CD8-positive, alpha-beta T cell (primary cell): ENCODE measurements at regions of chr19 and their contacts with region 1.

Region 1: GRCh38 chr19:48993175-48994034 is at the starts of genes GYS1 and RUVBL2:
- DNase-seq: peak; percentile 98 to 100 (median 99)
- ATAC-seq: peak; percentile 93
- H3K4me3 ChIP-seq: peak within 1 kb of the TSS; percentile 77 to 80
- H3K4me3 Mint-ChIP-seq: peak within 1 kb of the TSS; percentile 91
- H3K27ac ChIP-seq: peak within 1 kb of the TSS; percentile 66 to 83
- H3K27ac Mint-ChIP-seq: peak within 1 kb of the TSS; percentile 93
- H3K4me1 ChIP-seq: peaks cover 22% of the 10 kb centered on the region
- H3K4me1 Mint-ChIP-seq: peaks cover 42% of the 10 kb centered on the region
- H3K27me3 ChIP-seq: no peaks in the 10 kb centered on the region
- H3K27me3 Mint-ChIP-seq: no peaks in the 10 kb centered on the region
- CTCF ChIP-seq: peak; percentile 98
- total RNA-seq, gene GYS1: 9.5 to 11.9 TPM
- total RNA-seq, gene RUVBL2: 10.5 to 11.5 TPM

Region 2: DNA sequence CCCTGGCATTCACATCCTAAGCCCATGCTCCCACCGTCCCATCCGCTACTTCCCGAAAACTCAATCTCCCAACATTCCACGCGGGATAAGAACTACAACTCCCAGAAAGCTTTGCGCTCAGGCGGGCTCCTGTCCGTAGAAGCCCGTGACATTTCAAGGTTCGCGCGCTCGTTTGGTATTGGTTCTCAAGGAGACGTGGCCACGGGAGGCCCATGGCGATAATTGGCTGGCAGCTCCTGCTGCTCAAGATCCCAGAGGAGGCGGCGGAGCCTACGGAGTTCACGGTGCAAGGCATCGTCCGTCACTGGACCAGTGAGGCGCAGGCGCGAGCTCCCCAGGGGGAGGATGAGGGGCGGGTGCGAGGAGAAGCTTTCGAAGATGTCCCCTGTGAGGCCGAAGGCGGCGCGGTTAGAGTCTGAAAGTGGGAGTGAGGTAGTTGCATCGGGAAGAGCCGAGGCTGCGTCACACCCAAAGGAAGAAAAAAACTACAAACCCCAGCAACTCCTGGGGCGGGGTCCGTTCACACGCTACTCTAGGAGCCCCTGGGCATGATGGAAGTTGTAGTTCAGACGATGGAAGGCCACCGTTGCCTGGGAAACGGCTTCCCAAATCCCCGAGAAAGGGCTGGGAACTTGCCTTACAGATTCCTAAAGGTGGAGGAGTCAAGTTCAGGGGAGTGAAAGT is 272.6 kb before region 1 on chr19:
- CTCF ChIA-PET with region 1: no interaction called
- POLR2A ChIA-PET with region 1: interaction called, 4 read pairs
- intact Hi-C with region 1: loop called in 1 of 2 experiments (anchors 10 kb)
- DNase-seq: peak; percentile 81 to 96 (median 90)
- ATAC-seq: peak; percentile 80
- H3K4me3 ChIP-seq: peak overlapping the region; percentile 65 to 69
- H3K4me3 Mint-ChIP-seq: peak overlapping the region; percentile 96
- H3K27ac ChIP-seq: peak overlapping the region; percentile 52 to 88
- H3K27ac Mint-ChIP-seq: peak overlapping the region; percentile 96
- H3K4me1 ChIP-seq: peaks cover 16% of the 10 kb centered on the region
- H3K4me1 Mint-ChIP-seq: peaks cover 24% of the 10 kb centered on the region
- H3K27me3 ChIP-seq: no peaks in the 10 kb centered on the region
- H3K27me3 Mint-ChIP-seq: no peaks in the 10 kb centered on the region
- CTCF ChIP-seq: no peak

Region 3: GRCh38 chr19:48954595-48955310 is 38.7 kb before region 1 on chr19 and contains the start of gene BAX:
- CTCF ChIA-PET with region 1: no interaction called
- POLR2A ChIA-PET with region 1: interaction called, 4 read pairs
- intact Hi-C with region 1: loop called (anchors 1 kb)
- DNase-seq: peak; percentile 61 to 91 (median 81)
- ATAC-seq: peak; percentile 86
- H3K4me3 ChIP-seq: peak within 1 kb of the TSS; percentile 60 to 98
- H3K4me3 Mint-ChIP-seq: peak within 1 kb of the TSS; percentile 91
- H3K27ac ChIP-seq: peak within 1 kb of the TSS; percentile 69 to 93
- H3K27ac Mint-ChIP-seq: peak within 1 kb of the TSS; percentile 85
- H3K4me1 ChIP-seq: peaks cover 19% of the 10 kb centered on the region
- H3K4me1 Mint-ChIP-seq: peaks cover 29% of the 10 kb centered on the region
- H3K27me3 ChIP-seq: no peaks in the 10 kb centered on the region
- H3K27me3 Mint-ChIP-seq: no peaks in the 10 kb centered on the region
- CTCF ChIP-seq: no peak
- total RNA-seq, gene BAX: 55.7 to 57.4 TPM

Region 4: DNA sequence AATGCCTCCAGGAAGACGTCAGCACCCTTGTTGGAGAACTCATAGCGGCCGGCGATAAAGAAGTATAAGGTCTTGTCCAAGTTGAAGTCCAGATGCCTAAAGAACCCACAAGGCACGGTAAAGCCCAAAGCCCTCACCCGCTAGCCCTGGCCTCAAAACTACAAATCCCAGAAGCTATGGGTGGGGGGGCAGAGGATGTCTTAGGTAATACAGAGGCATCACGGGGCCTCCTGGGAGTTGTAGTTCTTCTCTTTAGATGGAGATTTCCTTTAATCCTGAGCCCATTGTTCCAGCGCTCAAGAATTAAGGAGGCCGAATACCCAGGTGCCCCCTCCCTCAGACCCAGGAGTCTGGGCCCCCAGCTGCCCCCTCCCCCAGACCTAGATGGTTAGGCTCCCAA is 11.1 kb before region 1 on chr19:
- CTCF ChIA-PET with region 1: interaction called, 13 read pairs
- POLR2A ChIA-PET with region 1: interaction called, 7 read pairs
- intact Hi-C with region 1: no loop called
- DNase-seq: no peak
- ATAC-seq: no peak
- H3K4me3 ChIP-seq: no peak overlapping the region
- H3K4me3 Mint-ChIP-seq: no peak overlapping the region
- H3K27ac ChIP-seq: no peak overlapping the region
- H3K27ac Mint-ChIP-seq: no peak overlapping the region
- H3K4me1 ChIP-seq: no peaks in the 10 kb centered on the region
- H3K4me1 Mint-ChIP-seq: no peaks in the 10 kb centered on the region
- H3K27me3 ChIP-seq: no peaks in the 10 kb centered on the region
- H3K27me3 Mint-ChIP-seq: no peaks in the 10 kb centered on the region
- CTCF ChIP-seq: no peak

Region 5: GRCh38 chr19:49042177-49042576 is 48.8 kb after region 1 on chr19:
- CTCF ChIA-PET with region 1: no interaction called
- POLR2A ChIA-PET with region 1: no interaction called
- intact Hi-C with region 1: no loop called
- DNase-seq: no peak
- ATAC-seq: no peak
- H3K4me3 ChIP-seq: no peak overlapping the region
- H3K4me3 Mint-ChIP-seq: no peak overlapping the region
- H3K27ac ChIP-seq: no peak overlapping the region
- H3K27ac Mint-ChIP-seq: no peak overlapping the region
- H3K4me1 ChIP-seq: no peaks in the 10 kb centered on the region
- H3K4me1 Mint-ChIP-seq: no peaks in the 10 kb centered on the region
- H3K27me3 ChIP-seq: no peaks in the 10 kb centered on the region
- H3K27me3 Mint-ChIP-seq: no peaks in the 10 kb centered on the region
- CTCF ChIP-seq: no peak

Region 6: DNA sequence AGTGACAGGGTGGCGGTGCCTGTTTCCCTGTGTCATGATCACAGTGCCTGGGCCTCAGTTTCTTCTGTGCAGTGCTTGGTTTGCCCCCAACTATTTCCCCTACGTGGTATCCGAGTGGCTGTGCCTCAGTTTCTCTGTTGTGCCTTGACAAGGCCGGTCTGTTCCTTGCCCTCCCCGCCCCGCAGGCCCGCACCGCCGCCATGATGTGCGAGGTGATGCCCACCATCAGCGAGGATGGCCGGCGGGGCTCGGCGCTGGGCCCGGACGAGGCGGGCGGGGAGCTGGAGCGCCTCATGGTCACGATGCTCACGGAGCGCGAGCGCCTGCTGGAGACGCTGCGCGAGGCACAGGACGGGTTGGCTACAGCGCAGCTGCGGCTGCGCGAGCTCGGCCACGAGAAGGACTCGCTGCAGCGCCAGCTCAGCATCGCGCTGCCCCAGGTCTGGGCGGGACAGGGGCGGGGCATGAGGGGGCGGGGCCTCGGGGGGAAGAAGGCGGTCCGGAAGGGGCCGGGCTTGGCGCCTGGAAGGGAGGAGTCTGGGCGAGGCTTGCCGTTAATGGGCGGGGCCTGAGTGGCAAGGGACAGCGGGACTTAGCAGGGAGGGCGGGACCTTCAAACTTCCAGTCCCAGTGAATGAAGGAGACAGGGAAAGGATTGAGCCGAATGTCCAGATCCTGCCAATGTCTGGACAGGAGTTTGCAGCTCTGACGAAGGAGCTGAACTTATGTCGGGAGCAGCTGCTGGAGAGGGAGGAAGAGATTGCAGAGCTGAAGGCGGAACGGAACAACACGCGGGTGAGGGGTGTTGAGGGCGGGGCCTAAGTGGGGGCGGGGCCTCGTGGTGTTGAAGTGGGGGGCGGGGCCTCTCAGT is 134.5 kb after region 1 on chr19:
- CTCF ChIA-PET with region 1: interaction called, 6 read pairs
- POLR2A ChIA-PET with region 1: interaction called, 6 read pairs
- intact Hi-C with region 1: loop called in 1 of 2 experiments (anchors 1 kb)
- DNase-seq: peak; percentile 88 to 97 (median 91)
- ATAC-seq: peak; percentile 96
- H3K4me3 ChIP-seq: peak overlapping the region; percentile 51 to 56
- H3K4me3 Mint-ChIP-seq: peak overlapping the region; percentile 79
- H3K27ac ChIP-seq: no peak overlapping the region
- H3K27ac Mint-ChIP-seq: peak overlapping the region; percentile 80
- H3K4me1 ChIP-seq: peaks cover 11% of the 10 kb centered on the region
- H3K4me1 Mint-ChIP-seq: peaks cover 17% of the 10 kb centered on the region
- H3K27me3 ChIP-seq: no peaks in the 10 kb centered on the region
- H3K27me3 Mint-ChIP-seq: no peaks in the 10 kb centered on the region
- CTCF ChIP-seq: no peak

Region 7: DNA sequence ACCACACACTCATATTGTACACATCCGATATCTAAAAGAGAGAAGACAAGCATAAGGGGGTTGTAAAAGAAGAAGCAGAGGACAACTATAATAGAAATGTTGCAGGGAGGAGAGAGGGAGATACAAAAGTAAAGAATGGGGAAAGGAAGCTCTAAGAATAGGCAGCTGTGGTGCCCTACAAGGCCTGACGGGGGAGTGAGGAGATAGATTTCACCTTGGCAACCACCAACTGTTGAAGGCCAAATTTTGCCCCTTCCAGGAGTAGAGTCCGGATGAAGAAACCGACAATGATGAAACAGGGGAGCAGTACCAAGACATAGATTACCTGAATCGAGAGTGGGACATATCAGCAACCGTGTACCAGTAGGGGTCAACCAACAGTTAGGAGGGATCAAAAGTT is 315.7 kb after region 1 on chr19:
- CTCF ChIA-PET with region 1: no interaction called
- POLR2A ChIA-PET with region 1: no interaction called
- intact Hi-C with region 1: no loop called
- DNase-seq: no peak
- ATAC-seq: no peak
- H3K4me3 ChIP-seq: no peak overlapping the region
- H3K4me3 Mint-ChIP-seq: no peak overlapping the region
- H3K27ac ChIP-seq: no peak overlapping the region
- H3K27ac Mint-ChIP-seq: no peak overlapping the region
- H3K4me1 ChIP-seq: no peaks in the 10 kb centered on the region
- H3K4me1 Mint-ChIP-seq: no peaks in the 10 kb centered on the region
- H3K27me3 ChIP-seq: no peaks in the 10 kb centered on the region
- H3K27me3 Mint-ChIP-seq: no peaks in the 10 kb centered on the region
- CTCF ChIP-seq: no peak

Region 8: GRCh38 chr19:49766007-49766937 is 772.9 kb after region 1 on chr19:
- CTCF ChIA-PET with region 1: no interaction called
- POLR2A ChIA-PET with region 1: no interaction called
- intact Hi-C with region 1: loop called in 1 of 2 experiments (anchors 1 kb)
- DNase-seq: peak; percentile 97 to 100 (median 99)
- ATAC-seq: peak; percentile 87
- H3K4me3 ChIP-seq: peak overlapping the region; percentile 62 to 76
- H3K4me3 Mint-ChIP-seq: peak overlapping the region; percentile 82
- H3K27ac ChIP-seq: peak overlapping the region; percentile 66 to 87
- H3K27ac Mint-ChIP-seq: peak overlapping the region; percentile 93
- H3K4me1 ChIP-seq: peaks cover 24% of the 10 kb centered on the region
- H3K4me1 Mint-ChIP-seq: peaks cover 38% of the 10 kb centered on the region
- H3K27me3 ChIP-seq: no peaks in the 10 kb centered on the region
- H3K27me3 Mint-ChIP-seq: no peaks in the 10 kb centered on the region
- CTCF ChIP-seq: no peak